Activated CD4-positive, alpha-beta T cell treated with anti-CD3 and anti-CD28 coated beads for 36 hours (primary cell): ENCODE measurements at regions of chr6 and their contacts with region 1.

Region 1: GRCh38 chr6:29589423-29590048 is 4.6 kb downstream of the OR2H2 start:
- DNase-seq: peak; percentile 69
- ATAC-seq: peak; percentile 71
- H3K4me3 Mint-ChIP-seq: no peak overlapping the region
- H3K27ac Mint-ChIP-seq: no peak overlapping the region
- H3K4me1 Mint-ChIP-seq: no peaks in the 10 kb centered on the region
- H3K27me3 Mint-ChIP-seq: peaks cover 2% of the 10 kb centered on the region

Region 2: GRCh38 chr6:28683944-28684538 is 905.5 kb before region 1 on chr6:
- CTCF ChIA-PET with region 1: no interaction called
- POLR2A ChIA-PET with region 1: no interaction called
- intact Hi-C with region 1: loop called (anchors 2 kb)
- DNase-seq: peak; percentile 13
- ATAC-seq: peak; percentile 53
- H3K4me3 Mint-ChIP-seq: no peak overlapping the region
- H3K27ac Mint-ChIP-seq: no peak overlapping the region
- H3K4me1 Mint-ChIP-seq: peaks cover 6% of the 10 kb centered on the region
- H3K27me3 Mint-ChIP-seq: peaks cover 54% of the 10 kb centered on the region

Region 3: DNA sequence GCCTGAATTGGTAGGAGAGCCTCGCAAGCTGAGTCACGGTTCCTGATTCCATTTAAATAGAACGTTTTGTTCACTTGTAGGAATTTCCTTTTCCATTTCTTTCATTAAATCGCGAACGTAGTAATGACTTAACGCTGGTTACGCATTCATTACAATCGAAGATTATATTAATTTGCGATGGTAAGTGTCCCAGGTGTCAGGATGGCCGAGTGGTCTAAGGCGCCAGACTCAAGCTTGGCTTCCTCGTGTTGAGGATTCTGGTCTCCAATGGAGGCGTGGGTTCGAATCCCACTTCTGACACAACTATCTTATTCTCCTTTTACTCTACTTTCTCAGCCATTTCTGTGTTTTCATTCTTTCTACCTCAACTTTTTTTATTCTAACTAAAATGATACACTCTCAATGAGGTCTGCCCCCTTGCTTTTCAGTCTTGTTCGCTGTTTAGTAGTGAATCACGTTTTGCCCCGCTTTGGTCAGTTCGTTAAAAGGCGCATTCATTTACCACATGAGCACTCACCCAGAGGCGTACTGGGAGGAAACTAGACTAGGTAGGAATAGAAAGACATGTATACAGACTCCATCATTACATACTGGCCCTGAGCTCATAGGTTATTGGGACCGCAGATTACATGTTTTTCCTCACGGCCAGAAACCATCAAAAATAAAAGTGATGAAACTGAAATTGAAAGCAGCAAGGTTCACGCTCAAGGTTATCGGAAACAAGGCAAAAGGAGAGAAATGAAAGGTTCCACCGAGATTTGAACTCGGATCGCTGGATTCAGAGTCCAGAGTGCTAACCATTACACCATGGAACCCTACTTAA is 648.5 kb before region 1 on chr6:
- CTCF ChIA-PET with region 1: no interaction called
- POLR2A ChIA-PET with region 1: no interaction called
- intact Hi-C with region 1: no loop called
- DNase-seq: peak; percentile 87
- ATAC-seq: peak; percentile 72
- H3K4me3 Mint-ChIP-seq: peak overlapping the region; percentile 79
- H3K27ac Mint-ChIP-seq: peak overlapping the region; percentile 96
- H3K4me1 Mint-ChIP-seq: peaks cover 39% of the 10 kb centered on the region
- H3K27me3 Mint-ChIP-seq: no peaks in the 10 kb centered on the region

Region 4: DNA sequence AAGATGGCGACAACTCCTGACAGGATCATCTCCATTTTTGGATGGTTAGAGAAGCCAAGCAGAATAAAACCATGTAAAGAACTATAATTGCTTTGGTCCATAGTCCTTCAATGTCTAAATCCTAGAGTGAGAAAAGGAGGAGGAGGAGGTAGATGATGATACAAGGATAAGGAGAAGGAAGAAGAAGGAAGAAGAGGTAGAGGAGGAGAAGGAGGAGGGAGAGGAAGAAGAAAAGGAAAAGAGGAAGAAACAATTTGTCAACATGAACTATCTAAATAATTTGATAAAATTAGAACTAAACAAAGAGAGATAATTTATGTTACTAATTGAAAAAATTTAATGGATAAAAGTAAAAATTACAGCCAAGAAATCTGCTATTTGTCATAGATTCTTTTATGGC is 544.5 kb before region 1 on chr6 and contains the start of gene OR2W1:
- CTCF ChIA-PET with region 1: no interaction called
- POLR2A ChIA-PET with region 1: no interaction called
- intact Hi-C with region 1: loop called in 1 of 2 experiments (anchors 10 kb)
- DNase-seq: no peak
- ATAC-seq: no peak
- H3K4me3 Mint-ChIP-seq: no peak within 1 kb of the TSS
- H3K27ac Mint-ChIP-seq: no peak within 1 kb of the TSS
- H3K4me1 Mint-ChIP-seq: no peaks in the 10 kb centered on the region
- H3K27me3 Mint-ChIP-seq: peaks cover 36% of the 10 kb centered on the region
- total RNA-seq, gene OR2W1: not detected

Region 5: DNA sequence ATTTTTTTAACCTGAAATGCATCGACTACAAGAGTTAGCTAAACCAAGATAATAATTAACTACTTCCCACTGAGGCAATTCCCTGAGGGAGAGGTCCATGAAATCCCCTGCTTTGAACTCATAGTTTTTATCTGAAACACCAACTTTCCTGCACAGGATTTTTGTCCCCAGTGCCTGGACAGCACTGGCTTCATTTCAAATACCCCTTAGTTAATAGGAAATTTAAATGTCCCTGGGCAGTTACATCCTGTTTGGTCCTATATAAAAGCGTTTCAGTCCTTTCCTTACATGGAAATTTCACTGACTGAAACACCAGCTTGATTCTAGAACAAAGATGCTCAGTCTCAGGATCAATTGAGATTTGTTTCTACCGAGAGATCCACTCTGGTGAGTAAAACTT is 288.1 kb before region 1 on chr6 and contains the start of gene OR14J1:
- CTCF ChIA-PET with region 1: no interaction called
- POLR2A ChIA-PET with region 1: no interaction called
- intact Hi-C with region 1: no loop called
- DNase-seq: no peak
- ATAC-seq: no peak
- H3K4me3 Mint-ChIP-seq: no peak within 1 kb of the TSS
- H3K27ac Mint-ChIP-seq: no peak within 1 kb of the TSS
- H3K4me1 Mint-ChIP-seq: no peaks in the 10 kb centered on the region
- H3K27me3 Mint-ChIP-seq: peaks cover 24% of the 10 kb centered on the region
- total RNA-seq, gene OR14J1: not detected

Region 6: DNA sequence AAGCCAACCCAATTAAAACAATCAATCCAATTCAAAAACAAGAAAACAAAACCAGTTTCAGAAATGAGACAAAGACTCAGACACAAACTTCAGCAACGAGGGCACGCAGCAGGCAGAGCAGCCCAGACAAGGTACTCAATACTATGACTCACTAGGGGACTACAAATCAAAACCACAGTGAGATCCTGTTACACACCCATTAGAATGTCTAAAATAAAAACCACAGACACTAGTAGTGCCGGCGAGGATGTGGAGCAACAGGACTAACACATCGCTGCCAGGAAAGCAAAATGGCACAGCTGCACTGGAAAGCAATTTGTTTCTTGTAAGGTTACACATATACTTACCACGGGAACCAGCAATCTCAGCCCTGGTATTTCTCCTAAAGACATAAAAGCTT is 73.4 kb before region 1 on chr6:
- CTCF ChIA-PET with region 1: no interaction called
- POLR2A ChIA-PET with region 1: no interaction called
- intact Hi-C with region 1: no loop called
- DNase-seq: peak; percentile 61
- ATAC-seq: peak; percentile 99
- H3K4me3 Mint-ChIP-seq: no peak overlapping the region
- H3K27ac Mint-ChIP-seq: no peak overlapping the region
- H3K4me1 Mint-ChIP-seq: peaks cover 7% of the 10 kb centered on the region
- H3K27me3 Mint-ChIP-seq: peaks cover 18% of the 10 kb centered on the region

Region 7: DNA sequence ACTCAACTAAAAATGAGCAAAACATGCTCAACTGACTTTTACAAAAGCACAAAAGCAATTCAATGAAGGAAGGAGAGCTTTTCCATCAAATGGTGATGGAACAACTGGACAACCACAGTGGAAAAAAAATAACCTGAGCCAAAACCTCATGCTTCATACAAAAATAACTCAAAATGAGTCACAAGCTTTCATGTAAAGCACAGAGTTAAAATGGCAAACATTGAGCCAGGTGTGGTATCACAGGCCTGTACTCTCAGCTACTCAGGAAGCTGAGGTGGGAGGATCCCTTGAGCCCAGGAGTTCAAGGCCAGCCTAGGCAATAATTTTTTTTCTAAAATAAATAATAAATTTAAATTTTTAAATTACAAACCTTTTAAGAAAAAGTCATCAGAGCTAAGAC is 219.7 kb after region 1 on chr6:
- CTCF ChIA-PET with region 1: no interaction called
- POLR2A ChIA-PET with region 1: no interaction called
- intact Hi-C with region 1: no loop called
- DNase-seq: no peak
- ATAC-seq: peak; percentile 36
- H3K4me3 Mint-ChIP-seq: no peak overlapping the region
- H3K27ac Mint-ChIP-seq: no peak overlapping the region
- H3K4me1 Mint-ChIP-seq: peaks cover 4% of the 10 kb centered on the region
- H3K27me3 Mint-ChIP-seq: peaks cover 10% of the 10 kb centered on the region